PC-3 (cell line): ENCODE measurements at regions of chr1 and their contacts with region 1.

Region 1: DNA sequence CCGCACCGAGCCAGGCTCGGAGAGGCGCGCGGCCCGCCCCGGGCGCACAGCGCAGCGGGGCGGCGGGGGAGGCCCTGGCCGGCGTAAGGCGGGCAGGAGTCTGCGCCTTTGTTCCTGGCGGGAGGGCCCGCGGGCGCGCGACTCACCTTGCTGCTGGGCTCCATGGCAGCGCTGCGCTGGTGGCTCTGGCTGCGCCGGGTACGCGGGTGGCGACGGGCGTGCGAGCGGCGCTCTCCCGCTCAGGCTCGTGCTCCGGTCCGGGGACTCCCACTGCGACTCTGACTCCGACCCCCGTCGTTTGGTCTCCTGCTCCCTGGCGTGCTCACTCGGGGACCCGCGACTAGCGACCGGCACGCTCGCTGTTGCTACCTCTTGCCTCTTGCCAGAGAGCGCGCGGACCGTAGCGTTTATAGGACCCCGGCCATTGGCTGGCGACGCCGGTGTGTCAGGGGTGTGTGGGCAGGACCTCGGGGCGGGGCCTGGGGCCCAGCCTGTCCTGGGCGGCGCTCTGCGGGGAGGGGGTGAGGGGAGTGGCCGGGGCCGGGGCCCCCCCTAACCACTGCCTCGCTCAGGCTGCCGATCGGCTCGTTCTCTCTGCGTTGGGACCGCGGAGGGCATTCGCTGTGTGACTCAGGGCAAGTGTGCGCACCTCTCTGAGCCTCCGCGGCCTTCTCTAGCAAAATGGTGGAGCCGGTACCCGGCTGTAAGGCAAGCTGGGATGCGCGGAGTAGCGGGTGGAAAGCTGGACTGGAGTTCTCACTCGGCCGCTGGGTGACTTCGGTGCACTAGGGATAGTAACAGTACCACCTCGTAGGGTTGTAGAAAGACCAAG is at the start of gene SLC2A1:
- DNase-seq: peak; percentile 94
- ATAC-seq: peak; percentile 77
- H3K4me3 ChIP-seq: peak within 1 kb of the TSS; percentile 99
- H3K27ac ChIP-seq: peak within 1 kb of the TSS; percentile 49
- H3K4me1 ChIP-seq: peaks cover 70% of the 10 kb centered on the region
- H3K27me3 ChIP-seq: no peaks in the 10 kb centered on the region
- CTCF ChIP-seq: no peak
- total RNA-seq, gene SLC2A1: 245 and 264 TPM in 2 replicates

Region 2: GRCh38 chr1:42214447-42214871 is 744.2 kb before region 1 on chr1:
- CTCF ChIA-PET with region 1: no interaction called
- POLR2A ChIA-PET with region 1: no interaction called
- intact Hi-C with region 1: no loop called
- DNase-seq: peak; percentile 71
- ATAC-seq: peak; percentile 60
- H3K4me3 ChIP-seq: no peak overlapping the region
- H3K27ac ChIP-seq: peak overlapping the region; percentile 64
- H3K4me1 ChIP-seq: peaks cover 39% of the 10 kb centered on the region
- H3K27me3 ChIP-seq: no peaks in the 10 kb centered on the region
- CTCF ChIP-seq: no peak

Region 3: DNA sequence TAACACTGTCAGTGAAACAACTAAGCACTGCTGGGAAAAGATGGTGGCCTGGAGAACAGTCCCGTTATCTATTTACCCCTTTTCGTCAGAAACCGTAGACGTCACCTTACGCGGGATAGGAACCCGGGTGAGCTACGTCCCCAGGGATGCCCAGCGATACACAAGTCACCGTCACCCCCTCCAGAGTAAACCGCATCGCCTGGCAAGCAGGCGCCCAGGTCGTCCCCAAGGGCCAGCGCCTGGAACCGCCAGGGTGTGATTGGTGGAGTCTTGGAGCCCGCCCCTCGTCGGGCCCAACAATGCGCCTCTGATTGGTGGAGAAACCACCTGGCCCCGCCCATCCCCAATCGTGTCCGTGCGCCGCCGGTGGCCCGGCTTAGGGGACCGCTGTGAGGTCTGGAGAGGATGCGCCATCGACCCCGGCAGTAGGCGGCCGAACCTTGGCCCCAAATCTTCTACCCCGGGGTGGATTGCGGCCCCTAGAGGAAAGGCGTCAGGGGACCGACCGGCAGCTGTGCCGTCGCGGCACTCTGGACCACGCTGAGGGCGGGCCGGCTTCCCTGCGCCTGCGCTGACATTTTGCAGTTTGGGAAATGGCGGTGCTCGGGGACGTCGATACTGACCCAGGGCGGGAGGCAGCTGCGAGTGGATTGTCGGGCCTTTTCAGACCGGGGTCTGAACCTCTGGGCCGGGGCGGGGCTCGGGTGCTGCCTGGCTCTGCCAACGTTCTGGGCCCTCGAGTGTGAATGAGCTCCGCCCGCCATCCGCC is 34.4 kb before region 1 on chr1:
- CTCF ChIA-PET with region 1: interaction called, 5 read pairs
- POLR2A ChIA-PET with region 1: no interaction called
- intact Hi-C with region 1: loop called (anchors 5 kb)
- DNase-seq: peak; percentile 92
- ATAC-seq: peak; percentile 87
- H3K4me3 ChIP-seq: peak overlapping the region; percentile 79
- H3K27ac ChIP-seq: peak overlapping the region; percentile 72
- H3K4me1 ChIP-seq: peaks cover 25% of the 10 kb centered on the region
- H3K27me3 ChIP-seq: no peaks in the 10 kb centered on the region
- CTCF ChIP-seq: no peak; the same call in 1 of the 2 replicates

Region 4: GRCh38 chr1:42941640-42942330 is 16.9 kb before region 1 on chr1:
- CTCF ChIA-PET with region 1: no interaction called
- POLR2A ChIA-PET with region 1: no interaction called
- intact Hi-C with region 1: loop called (anchors 1 kb)
- DNase-seq: peak; percentile 97
- ATAC-seq: peak; percentile 36
- H3K4me3 ChIP-seq: peak overlapping the region; percentile 13; the same call in 1 of the 2 replicates
- H3K27ac ChIP-seq: peak overlapping the region; percentile 99
- H3K4me1 ChIP-seq: peaks cover 100% of the 10 kb centered on the region
- H3K27me3 ChIP-seq: no peaks in the 10 kb centered on the region
- CTCF ChIP-seq: no peak

Region 5: DNA sequence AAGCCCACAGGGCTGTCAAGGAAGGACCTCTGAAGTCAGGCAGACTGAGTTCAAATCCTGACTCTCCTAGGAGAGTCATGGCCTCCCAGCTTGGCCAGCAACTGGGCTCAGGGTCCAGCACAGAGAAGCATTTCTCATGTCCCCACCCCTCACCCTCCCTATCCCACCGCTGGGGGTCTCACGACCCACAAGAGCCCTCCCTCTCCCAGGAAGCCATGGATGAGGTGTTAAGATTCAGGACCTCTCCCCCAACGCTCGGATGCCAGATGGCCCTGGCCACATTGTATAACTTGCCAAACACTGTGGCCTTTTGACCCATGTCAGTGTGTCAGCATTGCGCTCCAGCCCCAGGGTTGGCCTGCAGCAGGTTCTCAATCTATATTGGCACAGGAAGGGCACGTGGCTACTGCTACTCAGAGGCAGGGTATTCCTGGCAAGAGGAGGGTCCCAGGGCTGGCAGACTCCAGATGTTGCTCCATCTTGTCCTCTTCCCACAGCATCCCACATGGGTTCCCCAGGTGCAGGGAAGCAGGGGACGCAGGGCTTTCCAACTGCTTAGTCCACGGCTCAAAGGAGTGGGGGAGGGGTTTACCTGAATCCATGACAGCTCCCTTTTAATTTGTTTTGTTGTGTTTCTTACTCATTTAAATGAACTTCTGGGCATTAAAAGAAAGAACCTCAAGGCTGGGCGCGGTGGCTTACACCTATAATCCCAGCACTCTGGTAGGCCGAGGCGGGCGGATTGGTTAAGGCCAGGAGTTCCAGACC is 10.6 kb before region 1 on chr1:
- CTCF ChIA-PET with region 1: no interaction called
- POLR2A ChIA-PET with region 1: interaction called, 10 read pairs
- intact Hi-C with region 1: no loop called
- DNase-seq: no peak
- ATAC-seq: no peak
- H3K4me3 ChIP-seq: no peak overlapping the region
- H3K27ac ChIP-seq: no peak overlapping the region
- H3K4me1 ChIP-seq: peaks cover 80% of the 10 kb centered on the region
- H3K27me3 ChIP-seq: no peaks in the 10 kb centered on the region
- CTCF ChIP-seq: no peak

Region 6: GRCh38 chr1:43035821-43036741 is 77.4 kb after region 1 on chr1:
- CTCF ChIA-PET with region 1: no interaction called
- POLR2A ChIA-PET with region 1: no interaction called
- intact Hi-C with region 1: loop called (anchors 5 kb)
- DNase-seq: no peak
- ATAC-seq: no peak
- H3K4me3 ChIP-seq: no peak overlapping the region
- H3K27ac ChIP-seq: no peak overlapping the region
- H3K4me1 ChIP-seq: peaks cover 20% of the 10 kb centered on the region
- H3K27me3 ChIP-seq: no peaks in the 10 kb centered on the region
- CTCF ChIP-seq: no peak